Activated CD4-positive, alpha-beta T cell treated with anti-CD3 and anti-CD28 coated beads, Interleukin-2, amount 10 ng/mL, durations not matched to agents 24 days and 14 days (primary cell): ENCODE measurements at regions of chr2 and their contacts with region 1.

Region 1: GRCh38 chr2:134118279-134119116 is 135.4 kb upstream of the MGAT5 start:
- DNase-seq: peak; percentile 94
- H3K4me3 Mint-ChIP-seq: peak overlapping the region; percentile 94
- H3K27ac Mint-ChIP-seq: no peak overlapping the region
- H3K4me1 Mint-ChIP-seq: peaks cover 32% of the 10 kb centered on the region
- H3K27me3 Mint-ChIP-seq: peaks cover 20% of the 10 kb centered on the region

Region 2: DNA sequence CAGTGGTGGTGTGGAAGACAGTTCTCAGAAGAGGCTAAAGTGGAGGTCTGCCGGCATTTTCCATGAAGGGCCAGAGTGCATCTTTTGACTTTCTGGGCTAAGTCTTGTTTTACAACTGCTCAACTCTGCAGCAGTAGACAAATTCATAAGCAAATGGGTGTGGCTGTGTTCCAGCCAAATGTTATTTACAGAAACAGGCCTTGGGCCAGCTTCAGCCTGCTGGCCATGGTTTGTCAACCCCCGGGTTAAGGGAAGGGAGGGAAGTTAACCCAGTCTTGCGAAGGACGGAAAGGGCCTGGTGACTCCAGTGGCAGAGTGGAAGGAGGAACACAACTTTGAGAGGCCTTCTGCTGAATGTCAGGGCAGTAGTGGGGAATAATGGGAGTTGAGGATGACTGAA is 516.0 kb before region 1 on chr2:
- intact Hi-C with region 1: no loop called
- DNase-seq: no peak
- H3K4me3 Mint-ChIP-seq: no peak overlapping the region
- H3K27ac Mint-ChIP-seq: no peak overlapping the region
- H3K4me1 Mint-ChIP-seq: no peaks in the 10 kb centered on the region
- H3K27me3 Mint-ChIP-seq: no peaks in the 10 kb centered on the region

Region 3: GRCh38 chr2:134137182-134137611 is 18.7 kb after region 1 on chr2:
- intact Hi-C with region 1: loop called (anchors 2 kb)
- DNase-seq: peak; percentile 60
- H3K4me3 Mint-ChIP-seq: peak overlapping the region; percentile 61
- H3K27ac Mint-ChIP-seq: peak overlapping the region; percentile 81
- H3K4me1 Mint-ChIP-seq: peaks cover 24% of the 10 kb centered on the region
- H3K27me3 Mint-ChIP-seq: no peaks in the 10 kb centered on the region

Region 4: GRCh38 chr2:134218930-134219658 is 100.6 kb after region 1 on chr2:
- intact Hi-C with region 1: loop called (anchors 1 kb)
- DNase-seq: peak; percentile 75
- H3K4me3 Mint-ChIP-seq: peak overlapping the region; percentile 27
- H3K27ac Mint-ChIP-seq: peak overlapping the region; percentile 66
- H3K4me1 Mint-ChIP-seq: peaks cover 36% of the 10 kb centered on the region
- H3K27me3 Mint-ChIP-seq: no peaks in the 10 kb centered on the region

Region 5: GRCh38 chr2:134250840-134251461 is 132.5 kb after region 1 on chr2:
- intact Hi-C with region 1: loop called (anchors 1 kb)
- DNase-seq: no peak
- H3K4me3 Mint-ChIP-seq: no peak overlapping the region
- H3K27ac Mint-ChIP-seq: peak overlapping the region; percentile 8
- H3K4me1 Mint-ChIP-seq: peaks cover 72% of the 10 kb centered on the region
- H3K27me3 Mint-ChIP-seq: peaks cover 10% of the 10 kb centered on the region

Region 6: DNA sequence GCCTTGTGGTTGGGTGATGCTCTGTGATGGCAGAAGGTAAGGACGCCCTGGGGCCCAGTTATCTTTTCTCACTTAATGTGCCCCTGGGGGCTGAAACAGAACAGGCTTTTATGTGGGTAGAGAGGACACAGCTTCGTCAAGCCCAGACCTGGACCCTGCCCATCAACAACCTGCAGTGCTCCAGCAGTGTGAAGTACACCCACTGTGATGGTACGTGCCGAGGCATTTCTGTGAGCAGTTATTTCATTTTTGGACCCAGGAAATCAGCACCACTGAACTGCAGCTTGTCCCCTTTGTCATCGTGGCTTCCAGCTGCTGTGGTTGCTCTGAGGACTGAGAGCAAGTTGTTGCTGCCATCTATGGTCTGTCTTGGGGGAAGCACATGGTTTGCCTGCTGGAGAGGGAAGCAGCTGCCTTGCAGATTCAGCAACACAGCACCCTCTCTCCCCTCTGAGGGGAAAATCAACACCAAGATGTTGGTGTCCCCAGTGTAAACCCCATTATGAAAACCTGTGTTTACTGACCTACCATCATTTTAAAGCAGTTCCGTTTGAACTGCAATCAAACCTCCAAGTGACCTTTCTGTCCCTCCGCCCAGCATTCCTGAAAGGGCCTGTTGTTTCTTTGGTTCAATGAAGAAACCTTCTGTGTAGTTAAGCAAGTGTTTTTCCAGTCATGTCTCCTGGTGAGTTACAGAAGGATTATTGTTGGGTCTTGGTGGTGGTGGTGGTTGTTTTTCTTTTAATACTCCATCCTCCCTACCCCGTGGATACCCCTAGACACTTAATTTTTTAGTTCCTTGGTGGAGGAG is 293.5 kb after region 1 on chr2:
- intact Hi-C with region 1: loop called (anchors 1 kb)
- DNase-seq: peak; percentile 92
- H3K4me3 Mint-ChIP-seq: no peak overlapping the region
- H3K27ac Mint-ChIP-seq: no peak overlapping the region
- H3K4me1 Mint-ChIP-seq: peaks cover 19% of the 10 kb centered on the region
- H3K27me3 Mint-ChIP-seq: no peaks in the 10 kb centered on the region

Region 7: DNA sequence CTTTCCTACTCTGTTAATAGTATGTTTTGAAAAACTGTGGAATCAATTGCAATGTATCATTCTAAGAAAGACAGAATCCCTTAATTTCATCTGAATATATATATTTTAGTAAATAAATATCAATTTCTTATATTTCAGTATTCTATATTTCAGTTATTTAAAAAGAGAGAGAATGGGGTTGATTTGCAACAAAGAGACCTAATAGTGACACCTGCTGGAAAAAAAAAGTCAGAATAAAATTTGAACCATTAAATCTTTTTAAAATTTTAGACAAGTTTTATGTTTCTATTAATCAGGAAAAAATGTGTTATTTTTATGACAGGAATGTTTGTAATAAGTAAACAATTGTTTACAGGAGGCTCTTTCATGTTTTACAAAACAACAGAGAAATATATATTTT is 779.4 kb after region 1 on chr2:
- intact Hi-C with region 1: loop called (anchors 1 kb)
- DNase-seq: no peak
- H3K4me3 Mint-ChIP-seq: no peak overlapping the region
- H3K27ac Mint-ChIP-seq: no peak overlapping the region
- H3K4me1 Mint-ChIP-seq: no peaks in the 10 kb centered on the region
- H3K27me3 Mint-ChIP-seq: peaks cover 27% of the 10 kb centered on the region